Activated naive CD4-positive, alpha-beta T cell treated with anti-CD3 and anti-CD28 coated beads for 36 hours (primary cell): ENCODE measurements at regions of chr19 and their contacts with region 1.

Region 1: DNA sequence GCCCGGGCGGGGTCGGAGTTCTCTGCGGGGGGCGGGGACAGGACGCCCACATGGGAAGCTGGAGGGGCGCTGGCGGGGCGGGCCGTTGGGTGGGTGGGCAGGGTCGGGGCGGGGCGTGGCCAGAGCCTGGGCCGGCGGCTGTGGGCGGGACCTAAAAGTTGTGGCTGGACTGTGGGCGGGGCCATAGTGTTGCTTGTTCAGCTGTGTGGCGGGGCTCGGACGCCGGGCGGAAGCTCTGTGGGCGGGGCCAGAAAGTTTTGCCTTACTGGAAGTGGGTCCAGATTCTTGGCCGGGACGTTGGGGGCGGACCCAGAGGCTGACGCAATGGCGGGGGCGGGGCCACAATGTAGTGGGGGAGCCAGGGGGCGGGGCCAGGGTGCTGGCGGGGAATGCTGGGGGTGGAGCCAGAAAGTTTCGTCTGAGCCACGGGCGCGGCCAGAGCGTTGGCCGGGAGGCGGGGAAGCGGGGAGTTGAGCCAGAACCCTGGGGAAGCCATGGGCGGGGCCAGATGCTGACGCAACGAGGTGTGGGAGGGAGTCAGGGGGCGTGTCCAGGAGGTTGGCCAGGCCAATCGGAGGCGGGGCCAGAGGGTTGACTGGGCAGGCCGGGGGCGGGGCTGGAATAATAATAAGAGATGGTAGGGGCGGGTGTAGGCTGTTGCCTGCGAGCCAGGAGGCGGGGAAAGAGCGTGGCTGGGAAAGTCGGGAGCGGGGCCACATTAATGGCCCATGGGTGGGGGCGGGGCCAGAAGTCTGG is 541 bp downstream of the CCDC9 start:
- DNase-seq: peak; percentile 100
- H3K4me3 Mint-ChIP-seq: peak overlapping the region; percentile 88
- H3K27ac Mint-ChIP-seq: peak overlapping the region; percentile 96
- H3K4me1 Mint-ChIP-seq: peaks cover 39% of the 10 kb centered on the region
- H3K27me3 Mint-ChIP-seq: no peaks in the 10 kb centered on the region

Region 2: DNA sequence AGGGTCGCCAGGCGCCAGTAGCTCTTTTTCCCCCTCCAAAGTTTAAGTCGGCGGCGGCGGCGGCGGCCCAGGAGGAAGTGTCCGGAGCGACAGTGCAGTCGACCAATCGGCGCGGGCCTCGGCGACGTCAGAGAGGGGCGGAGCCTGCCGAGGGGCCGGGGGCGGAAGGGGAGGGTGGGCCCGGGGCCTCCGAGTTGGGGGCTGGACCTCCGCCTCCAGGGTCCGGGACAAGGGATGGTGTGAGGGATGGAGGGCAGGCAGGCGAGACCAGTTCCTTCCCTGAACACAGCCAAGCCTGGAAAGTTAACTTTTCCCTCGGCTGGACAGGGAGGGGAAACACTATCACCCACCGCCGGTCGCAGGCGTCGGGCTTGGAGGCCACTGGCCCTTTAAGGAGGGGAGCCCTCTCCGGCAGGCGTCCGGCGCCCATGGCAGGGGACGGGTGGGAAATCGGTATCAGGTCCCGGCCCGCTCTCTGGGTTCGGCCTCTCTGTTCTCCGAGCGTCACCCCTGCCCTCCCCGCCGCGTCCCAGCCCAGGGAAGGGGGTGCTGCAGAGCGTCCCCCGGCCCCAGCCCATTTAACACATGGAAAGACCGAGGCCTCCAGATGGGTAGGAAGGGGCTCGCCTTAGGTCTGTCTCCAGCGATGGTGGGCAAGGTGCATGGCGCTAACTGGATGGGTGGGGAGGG is 539.7 kb before region 1 on chr19 and contains the start of gene PRKD2:
- CTCF ChIA-PET with region 1: no interaction called
- intact Hi-C with region 1: loop called (anchors 5 kb)
- DNase-seq: peak; percentile 93
- H3K4me3 Mint-ChIP-seq: peak within 1 kb of the TSS; percentile 96
- H3K27ac Mint-ChIP-seq: peak within 1 kb of the TSS; percentile 94
- H3K4me1 Mint-ChIP-seq: peaks cover 46% of the 10 kb centered on the region
- H3K27me3 Mint-ChIP-seq: no peaks in the 10 kb centered on the region
- total RNA-seq, gene PRKD2: 62.2 to 62.3 TPM

Region 3: DNA sequence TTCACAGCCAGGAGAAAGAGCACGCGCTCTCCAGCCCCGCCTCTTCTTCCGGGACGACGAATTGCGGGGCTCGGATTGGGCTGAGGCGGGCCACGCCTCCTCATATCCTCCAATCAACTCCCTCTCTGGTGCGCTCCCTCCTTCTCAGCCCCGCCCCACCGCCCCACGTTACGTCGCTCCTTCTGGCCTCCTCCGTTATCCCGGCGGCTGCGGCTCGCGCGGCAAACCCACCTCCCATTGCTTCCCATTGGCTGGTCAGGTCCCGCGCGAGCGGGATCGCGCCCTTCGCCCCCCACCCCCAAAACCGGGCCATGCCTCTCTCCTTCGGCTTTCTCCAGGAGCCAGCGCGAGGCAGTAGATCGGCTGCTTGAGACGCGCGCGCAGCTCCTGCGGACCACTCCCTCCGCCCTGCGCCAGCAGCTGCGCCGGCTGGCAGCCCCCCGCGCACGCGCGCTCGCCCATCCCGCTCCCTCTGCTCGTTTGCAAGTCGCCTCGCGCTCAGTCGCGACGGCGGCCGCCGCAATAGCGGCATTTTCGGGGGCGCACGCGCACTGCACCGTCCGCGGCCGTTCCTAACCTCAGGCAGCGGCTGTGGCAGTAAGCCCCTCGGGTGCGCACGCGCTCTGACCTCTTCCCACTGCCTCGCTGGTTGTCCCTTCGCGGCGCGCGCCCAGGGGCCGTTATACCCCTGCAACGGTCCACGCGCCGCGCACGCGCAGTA is 396.6 kb before region 1 on chr19:
- CTCF ChIA-PET with region 1: no interaction called
- intact Hi-C with region 1: loop called (anchors 5 kb)
- DNase-seq: peak; percentile 97
- H3K4me3 Mint-ChIP-seq: peak overlapping the region; percentile 84
- H3K27ac Mint-ChIP-seq: peak overlapping the region; percentile 87
- H3K4me1 Mint-ChIP-seq: peaks cover 21% of the 10 kb centered on the region
- H3K27me3 Mint-ChIP-seq: no peaks in the 10 kb centered on the region

Region 4: DNA sequence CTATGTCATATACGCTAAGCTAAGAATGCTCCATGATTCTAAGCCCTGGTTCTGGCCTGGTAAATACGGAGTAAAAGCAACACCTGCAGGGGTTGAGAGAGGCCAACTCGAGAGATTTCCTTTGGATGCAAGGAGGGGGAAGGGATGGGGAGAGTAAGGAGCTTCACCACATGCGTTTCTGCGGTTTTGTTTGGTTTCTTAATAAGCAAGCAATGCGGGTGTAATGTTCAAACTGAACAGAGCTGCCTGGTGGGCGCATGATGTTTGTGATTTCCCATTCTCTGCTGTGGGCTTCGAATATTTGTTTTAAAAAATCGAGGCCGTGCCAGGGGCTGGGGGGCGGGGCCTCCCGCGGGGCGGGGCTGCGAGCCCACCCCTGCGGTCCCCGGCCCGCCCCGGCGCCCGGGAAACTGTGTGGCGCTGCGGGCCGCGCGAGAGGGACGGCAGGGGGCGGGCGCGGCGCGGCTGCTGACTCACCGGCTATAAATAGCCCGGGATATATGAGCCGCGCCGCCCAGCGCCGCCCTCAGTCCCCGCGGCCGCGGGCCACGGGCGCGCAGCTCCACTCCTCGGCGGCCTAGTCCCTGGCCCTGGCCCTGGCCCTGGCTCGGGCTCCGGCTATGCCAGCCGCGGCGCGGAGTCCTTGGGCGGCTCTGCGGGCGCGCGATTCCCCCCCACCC is 31.0 kb before region 1 on chr19:
- CTCF ChIA-PET with region 1: no interaction called
- intact Hi-C with region 1: loop called (anchors 1 kb)
- DNase-seq: peak; percentile 83
- H3K4me3 Mint-ChIP-seq: peak overlapping the region; percentile 83
- H3K27ac Mint-ChIP-seq: peak overlapping the region; percentile 67
- H3K4me1 Mint-ChIP-seq: peaks cover 10% of the 10 kb centered on the region
- H3K27me3 Mint-ChIP-seq: no peaks in the 10 kb centered on the region

Region 5: GRCh38 chr19:47273313-47273977 is 16.6 kb after region 1 on chr19:
- CTCF ChIA-PET with region 1: interaction called, 3 read pairs
- intact Hi-C with region 1: loop called (anchors 1 kb)
- DNase-seq: peak; percentile 90
- H3K4me3 Mint-ChIP-seq: peak overlapping the region; percentile 96
- H3K27ac Mint-ChIP-seq: peak overlapping the region; percentile 97
- H3K4me1 Mint-ChIP-seq: peaks cover 22% of the 10 kb centered on the region
- H3K27me3 Mint-ChIP-seq: no peaks in the 10 kb centered on the region

Region 6: DNA sequence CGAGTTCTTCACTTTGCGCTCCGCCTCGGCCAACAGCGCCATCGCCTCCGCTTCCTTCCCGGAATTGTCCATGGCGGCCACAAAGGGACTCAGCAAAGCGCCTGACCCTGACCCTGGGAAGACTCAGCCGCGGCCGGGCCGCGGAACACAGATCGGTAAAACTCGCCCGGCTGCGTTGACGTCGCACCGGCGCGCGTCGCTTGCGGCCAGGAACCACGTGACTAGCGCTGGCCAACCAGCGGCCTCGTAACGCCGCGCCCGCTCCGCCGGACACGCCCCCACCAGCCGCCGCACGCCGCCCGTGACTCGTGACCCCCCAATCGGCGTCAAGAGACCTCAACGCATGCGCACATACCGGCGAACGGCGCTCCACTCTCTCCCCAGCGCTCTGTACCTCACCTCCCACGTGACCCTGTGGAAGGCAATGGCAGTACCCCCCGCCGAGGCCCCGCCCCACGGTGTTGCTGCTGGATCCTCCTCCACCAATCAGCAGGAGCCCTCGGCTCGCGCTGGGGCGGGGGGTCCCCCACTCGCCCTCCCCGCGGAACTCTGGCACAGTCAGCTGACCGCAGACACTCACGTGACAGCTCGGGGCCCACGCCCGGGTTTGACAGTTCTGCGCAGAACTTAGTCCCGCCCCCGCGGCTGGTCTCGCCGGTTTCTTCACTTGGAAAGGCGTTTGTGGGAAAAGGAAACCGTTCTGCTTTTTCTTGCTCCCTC is 258.2 kb after region 1 on chr19 and contains the start of gene NAPA:
- CTCF ChIA-PET with region 1: interaction called, 3 read pairs
- intact Hi-C with region 1: loop called (anchors 1 kb)
- DNase-seq: peak; percentile 100
- H3K4me3 Mint-ChIP-seq: peak within 1 kb of the TSS; percentile 98
- H3K27ac Mint-ChIP-seq: peak within 1 kb of the TSS; percentile 97
- H3K4me1 Mint-ChIP-seq: peaks cover 81% of the 10 kb centered on the region
- H3K27me3 Mint-ChIP-seq: no peaks in the 10 kb centered on the region
- total RNA-seq, gene NAPA: 72.5 to 75.1 TPM